ENCODE measurements at regions of chr10 and their contacts with region 1.

Region 1: GRCh38 chr10:17643755-17644484 is at the start of gene STAM:
- DNase-seq: peak; percentile 88 to 99 (median 94)
- ATAC-seq: peak; percentile 95
- H3K4me3 ChIP-seq: peak within 1 kb of the TSS; percentile 92
- H3K4me3 Mint-ChIP-seq: peak within 1 kb of the TSS; percentile 95 to 99 (median 98)
- H3K27ac ChIP-seq: peak within 1 kb of the TSS; percentile 96
- H3K27ac Mint-ChIP-seq: peak within 1 kb of the TSS; percentile 100
- H3K4me1 ChIP-seq: peaks cover 17 to 35% of the 10 kb centered on the region in 2 donors
- H3K4me1 Mint-ChIP-seq: peaks cover 33 to 71% (median 57%) of the 10 kb centered on the region in 7 donors
- H3K27me3 ChIP-seq: no peaks in the 10 kb centered on the region
- H3K27me3 Mint-ChIP-seq: peaks cover 0 to 3% (median 0%) of the 10 kb centered on the region in 5 donors
- total RNA-seq, gene STAM: 18.3 to 25.4 (median 19.6) TPM

Region 2: GRCh38 chr10:16835228-16835627 is 808.7 kb before region 1 on chr10:
- CTCF ChIA-PET with region 1: no interaction called
- POLR2A ChIA-PET with region 1: no interaction called
- intact Hi-C with region 1: loop called in 1 of 2 experiments (anchors 5 kb)
- DNase-seq: peak in 7 of 9 donors; percentile 39 to 68 (median 62)
- ATAC-seq: peak; percentile 92
- H3K4me3 ChIP-seq: peak overlapping the region; percentile 5
- H3K4me3 Mint-ChIP-seq: peak overlapping the region in 9 of 10 donors; percentile 50 to 78 (median 64)
- H3K27ac ChIP-seq: peak overlapping the region; percentile 19
- H3K27ac Mint-ChIP-seq: peak overlapping the region; percentile 16 to 86 (median 63)
- H3K4me1 ChIP-seq: peaks cover 0 to 6% of the 10 kb centered on the region in 2 donors
- H3K4me1 Mint-ChIP-seq: peaks cover 5 to 23% (median 14%) of the 10 kb centered on the region in 7 donors
- H3K27me3 ChIP-seq: no peaks in the 10 kb centered on the region
- H3K27me3 Mint-ChIP-seq: peaks cover 0 to 2% (median 0%) of the 10 kb centered on the region in 5 donors

Region 3: DNA sequence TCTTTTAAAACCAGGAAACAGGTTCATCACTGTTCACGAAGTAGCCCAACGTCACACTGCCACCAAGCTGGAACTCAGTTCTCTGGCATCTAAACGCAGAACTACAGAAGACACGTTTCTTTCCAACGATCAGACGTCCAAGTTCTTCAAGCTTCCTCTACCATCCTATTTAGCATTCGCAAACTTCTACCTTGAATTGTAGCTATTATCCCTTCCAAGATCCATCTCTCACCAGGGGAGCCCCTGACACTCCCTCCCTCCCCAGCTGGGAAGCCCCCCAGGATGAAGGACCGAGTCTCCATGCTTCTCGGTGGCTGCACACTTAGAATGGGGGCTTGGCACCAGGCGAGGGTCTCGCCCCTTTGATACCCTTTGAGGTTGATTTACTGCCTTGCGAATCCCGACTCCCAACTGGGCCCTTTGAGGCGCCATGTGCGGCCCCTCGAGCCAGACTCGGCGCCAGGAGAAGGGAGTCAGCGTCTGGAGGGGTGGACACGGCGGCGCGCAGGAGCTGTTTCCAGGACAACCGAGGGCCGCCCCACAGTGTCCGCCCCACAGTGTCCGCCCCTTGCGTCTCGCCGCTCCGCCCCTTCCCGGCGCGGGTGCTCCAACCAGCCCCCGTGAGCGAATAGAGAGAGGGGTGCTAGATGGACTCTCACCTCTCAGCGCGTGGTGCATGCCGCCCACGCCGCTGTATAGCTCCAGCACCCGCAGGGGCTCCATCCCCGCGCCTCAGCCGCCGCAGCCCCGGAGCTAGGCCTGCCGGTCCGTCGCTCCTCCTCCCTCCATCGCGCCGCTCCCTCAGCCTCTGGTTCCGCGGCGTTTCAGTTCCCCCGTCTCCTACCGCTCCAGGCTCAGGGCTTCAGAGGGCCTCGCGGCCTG is 442.8 kb before region 1 on chr10 and contains the start of gene TRDMT1:
- CTCF ChIA-PET with region 1: no interaction called
- POLR2A ChIA-PET with region 1: interaction called, 4 read pairs
- intact Hi-C with region 1: loop called in 1 of 2 experiments (anchors 10 kb)
- DNase-seq: peak; percentile 60 to 82 (median 74)
- ATAC-seq: peak; percentile 89
- H3K4me3 ChIP-seq: peak within 1 kb of the TSS; percentile 94
- H3K4me3 Mint-ChIP-seq: peak within 1 kb of the TSS; percentile 86 to 99 (median 94)
- H3K27ac ChIP-seq: peak within 1 kb of the TSS; percentile 90
- H3K27ac Mint-ChIP-seq: peak within 1 kb of the TSS; percentile 90 to 99 (median 96)
- H3K4me1 ChIP-seq: peaks cover 9 to 15% of the 10 kb centered on the region in 2 donors
- H3K4me1 Mint-ChIP-seq: peaks cover 25 to 67% (median 51%) of the 10 kb centered on the region in 7 donors
- H3K27me3 ChIP-seq: no peaks in the 10 kb centered on the region
- H3K27me3 Mint-ChIP-seq: peaks cover 0 to 4% (median 0%) of the 10 kb centered on the region in 5 donors
- total RNA-seq, gene TRDMT1: 10.2 to 30.6 (median 15.9) TPM

Region 4: GRCh38 chr10:17562614-17563013 is 81.3 kb before region 1 on chr10:
- CTCF ChIA-PET with region 1: no interaction called
- POLR2A ChIA-PET with region 1: no interaction called
- intact Hi-C with region 1: no loop called
- DNase-seq: no peak
- ATAC-seq: no peak
- H3K4me3 ChIP-seq: no peak overlapping the region
- H3K4me3 Mint-ChIP-seq: no peak overlapping the region
- H3K27ac ChIP-seq: no peak overlapping the region
- H3K27ac Mint-ChIP-seq: no peak overlapping the region
- H3K4me1 ChIP-seq: no peaks in the 10 kb centered on the region
- H3K4me1 Mint-ChIP-seq: no peaks in the 10 kb centered on the region
- H3K27me3 ChIP-seq: no peaks in the 10 kb centered on the region
- H3K27me3 Mint-ChIP-seq: peaks cover 0 to 2% (median 0%) of the 10 kb centered on the region in 5 donors

Region 5: DNA sequence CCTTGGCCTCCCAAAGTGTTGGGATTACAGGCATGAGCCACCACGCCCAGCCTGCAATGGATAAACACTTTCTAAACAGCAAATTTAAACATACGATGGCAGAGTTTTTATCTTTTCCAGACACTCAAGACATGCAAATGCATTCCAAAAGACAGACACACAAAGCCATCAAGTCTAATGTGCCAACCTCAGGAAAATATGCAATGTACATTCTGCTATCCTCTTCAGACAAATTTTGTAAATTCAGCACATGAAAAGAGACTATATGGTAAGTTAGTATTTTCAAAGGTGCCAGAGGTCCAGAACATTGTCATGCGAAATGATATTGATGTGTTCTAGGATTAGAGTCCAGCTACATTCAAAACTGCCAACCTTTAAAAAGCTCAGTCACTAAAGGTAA is 46.5 kb before region 1 on chr10:
- CTCF ChIA-PET with region 1: no interaction called
- POLR2A ChIA-PET with region 1: no interaction called
- intact Hi-C with region 1: no loop called
- DNase-seq: no peak
- ATAC-seq: no peak
- H3K4me3 ChIP-seq: no peak overlapping the region
- H3K4me3 Mint-ChIP-seq: no peak overlapping the region
- H3K27ac ChIP-seq: no peak overlapping the region
- H3K27ac Mint-ChIP-seq: no peak overlapping the region
- H3K4me1 ChIP-seq: no peaks in the 10 kb centered on the region
- H3K4me1 Mint-ChIP-seq: peaks cover 0 to 2% (median 0%) of the 10 kb centered on the region in 7 donors
- H3K27me3 ChIP-seq: no peaks in the 10 kb centered on the region
- H3K27me3 Mint-ChIP-seq: peaks cover 0 to 6% (median 0%) of the 10 kb centered on the region in 5 donors

Region 6: DNA sequence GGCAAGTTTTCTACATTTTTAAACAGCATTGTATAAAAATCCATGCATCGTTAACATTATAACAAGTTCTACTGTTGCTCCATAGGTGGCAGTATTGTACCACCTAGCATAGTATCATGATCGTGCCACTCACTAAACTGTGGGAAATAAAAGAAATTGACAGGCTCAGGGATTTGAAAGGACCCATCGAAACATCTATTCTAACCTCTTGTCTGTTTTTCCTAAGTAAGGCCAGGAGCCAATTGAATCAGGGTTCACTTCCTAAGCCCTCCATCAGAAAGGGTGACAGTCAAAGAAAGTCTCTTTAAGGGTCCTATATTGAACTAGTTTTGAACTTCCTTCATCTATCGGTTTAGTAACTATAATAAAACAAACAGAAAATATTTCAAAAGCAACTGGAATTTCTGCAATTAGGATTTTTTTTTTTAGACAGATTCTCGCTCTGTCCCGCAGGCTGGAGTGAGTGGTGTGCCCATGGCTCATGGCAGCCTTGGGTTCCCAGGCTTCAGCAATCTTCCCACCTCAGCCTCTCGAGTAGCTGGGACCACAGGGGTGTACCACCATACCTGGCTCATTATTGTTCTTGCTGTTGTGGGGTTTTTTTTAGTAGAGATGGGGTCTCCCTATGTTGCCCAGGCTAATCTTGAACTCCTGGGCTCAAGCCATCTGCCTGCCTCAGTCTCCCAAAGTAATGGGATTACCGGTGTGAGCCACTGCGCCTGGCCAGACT is 36.2 kb before region 1 on chr10:
- CTCF ChIA-PET with region 1: interaction called, 3 read pairs
- POLR2A ChIA-PET with region 1: no interaction called
- intact Hi-C with region 1: loop called in 1 of 2 experiments (anchors 2 kb)
- DNase-seq: peak in 7 of 9 donors; percentile 16 to 62 (median 55)
- ATAC-seq: peak; percentile 92
- H3K4me3 ChIP-seq: no peak overlapping the region
- H3K4me3 Mint-ChIP-seq: no peak overlapping the region
- H3K27ac ChIP-seq: no peak overlapping the region
- H3K27ac Mint-ChIP-seq: no peak overlapping the region
- H3K4me1 ChIP-seq: no peaks in the 10 kb centered on the region
- H3K4me1 Mint-ChIP-seq: peaks cover 0 to 3% (median 0%) of the 10 kb centered on the region in 7 donors
- H3K27me3 ChIP-seq: no peaks in the 10 kb centered on the region
- H3K27me3 Mint-ChIP-seq: peaks cover 0 to 4% (median 0%) of the 10 kb centered on the region in 5 donors

Region 7: GRCh38 chr10:17669185-17669872 is 25.4 kb after region 1 on chr10:
- CTCF ChIA-PET with region 1: no interaction called
- POLR2A ChIA-PET with region 1: interaction called, 4 read pairs
- intact Hi-C with region 1: loop called in 1 of 2 experiments (anchors 2 kb)
- DNase-seq: peak in 2 of 9 donors; percentile 9 to 32
- ATAC-seq: peak; percentile 58
- H3K4me3 ChIP-seq: no peak overlapping the region
- H3K4me3 Mint-ChIP-seq: peak overlapping the region in 7 of 10 donors; percentile 12 to 51 (median 32)
- H3K27ac ChIP-seq: no peak overlapping the region
- H3K27ac Mint-ChIP-seq: peak overlapping the region in 3 of 9 donors; percentile 20 to 50 (median 45)
- H3K4me1 ChIP-seq: peaks cover 10 to 11% of the 10 kb centered on the region in 2 donors
- H3K4me1 Mint-ChIP-seq: peaks cover 28 to 71% (median 54%) of the 10 kb centered on the region in 7 donors
- H3K27me3 ChIP-seq: no peaks in the 10 kb centered on the region
- H3K27me3 Mint-ChIP-seq: no peaks in the 10 kb centered on the region

Region 8: GRCh38 chr10:18104223-18104872 is 460.4 kb after region 1 on chr10:
- CTCF ChIA-PET with region 1: no interaction called
- POLR2A ChIA-PET with region 1: no interaction called
- intact Hi-C with region 1: no loop called
- DNase-seq: peak in 7 of 9 donors; percentile 0 to 28 (median 7)
- ATAC-seq: no peak
- H3K4me3 ChIP-seq: no peak overlapping the region
- H3K4me3 Mint-ChIP-seq: no peak overlapping the region
- H3K27ac ChIP-seq: no peak overlapping the region
- H3K27ac Mint-ChIP-seq: no peak overlapping the region
- H3K4me1 ChIP-seq: no peaks in the 10 kb centered on the region
- H3K4me1 Mint-ChIP-seq: no peaks in the 10 kb centered on the region
- H3K27me3 ChIP-seq: no peaks in the 10 kb centered on the region
- H3K27me3 Mint-ChIP-seq: peaks cover 0 to 5% (median 4%) of the 10 kb centered on the region in 5 donors

Region 9: DNA sequence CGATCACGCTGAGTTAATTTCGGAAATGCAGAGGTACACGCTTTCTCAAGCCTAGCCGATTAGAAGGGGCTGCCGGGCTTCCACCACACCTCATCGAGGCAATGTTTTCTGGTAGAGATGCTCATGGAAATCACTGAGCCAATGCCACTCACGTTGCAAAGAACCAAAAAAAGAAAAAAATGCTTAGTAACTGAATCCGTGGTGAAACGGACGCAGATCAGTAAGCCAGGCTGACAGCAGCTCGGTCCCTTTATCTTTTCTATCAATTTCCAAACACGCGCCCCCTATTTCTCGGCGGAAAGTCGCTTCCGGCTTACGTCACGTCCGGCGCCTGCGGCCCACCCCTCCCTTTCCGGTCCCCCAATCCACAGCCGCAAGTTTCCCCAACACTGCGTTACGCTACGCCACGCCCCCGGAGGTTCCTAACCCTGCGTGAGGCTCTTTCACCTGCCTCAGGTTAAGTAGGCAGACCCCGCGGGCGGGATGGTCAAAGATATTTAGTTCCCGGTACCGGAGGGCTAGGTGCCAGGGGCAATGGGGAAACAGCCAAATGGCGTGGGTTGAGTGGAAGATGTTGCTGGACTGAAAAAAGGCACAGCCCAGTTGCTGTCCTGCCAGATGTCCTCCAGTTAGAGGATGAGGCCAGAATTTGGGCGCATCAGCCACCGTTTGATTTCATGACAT is 1007.5 kb after region 1 on chr10 and contains the start of gene NSUN6:
- CTCF ChIA-PET with region 1: interaction called, 3 read pairs
- POLR2A ChIA-PET with region 1: no interaction called
- intact Hi-C with region 1: loop called in 1 of 2 experiments (anchors 1 kb)
- DNase-seq: peak; percentile 82 to 95 (median 95)
- ATAC-seq: peak; percentile 99
- H3K4me3 ChIP-seq: peak within 1 kb of the TSS; percentile 93
- H3K4me3 Mint-ChIP-seq: peak within 1 kb of the TSS; percentile 92 to 99 (median 96)
- H3K27ac ChIP-seq: peak within 1 kb of the TSS; percentile 91
- H3K27ac Mint-ChIP-seq: peak within 1 kb of the TSS; percentile 94 to 99 (median 98)
- H3K4me1 ChIP-seq: peaks cover 3 to 10% of the 10 kb centered on the region in 2 donors
- H3K4me1 Mint-ChIP-seq: peaks cover 10 to 53% (median 47%) of the 10 kb centered on the region in 7 donors
- H3K27me3 ChIP-seq: no peaks in the 10 kb centered on the region
- H3K27me3 Mint-ChIP-seq: peaks cover 0 to 2% (median 0%) of the 10 kb centered on the region in 5 donors
- total RNA-seq, gene NSUN6: 19.6 to 51.8 (median 41.3) TPM